Panc1 (cell line): ENCODE measurements at regions of chr6 and their contacts with region 1.

Region 1: DNA sequence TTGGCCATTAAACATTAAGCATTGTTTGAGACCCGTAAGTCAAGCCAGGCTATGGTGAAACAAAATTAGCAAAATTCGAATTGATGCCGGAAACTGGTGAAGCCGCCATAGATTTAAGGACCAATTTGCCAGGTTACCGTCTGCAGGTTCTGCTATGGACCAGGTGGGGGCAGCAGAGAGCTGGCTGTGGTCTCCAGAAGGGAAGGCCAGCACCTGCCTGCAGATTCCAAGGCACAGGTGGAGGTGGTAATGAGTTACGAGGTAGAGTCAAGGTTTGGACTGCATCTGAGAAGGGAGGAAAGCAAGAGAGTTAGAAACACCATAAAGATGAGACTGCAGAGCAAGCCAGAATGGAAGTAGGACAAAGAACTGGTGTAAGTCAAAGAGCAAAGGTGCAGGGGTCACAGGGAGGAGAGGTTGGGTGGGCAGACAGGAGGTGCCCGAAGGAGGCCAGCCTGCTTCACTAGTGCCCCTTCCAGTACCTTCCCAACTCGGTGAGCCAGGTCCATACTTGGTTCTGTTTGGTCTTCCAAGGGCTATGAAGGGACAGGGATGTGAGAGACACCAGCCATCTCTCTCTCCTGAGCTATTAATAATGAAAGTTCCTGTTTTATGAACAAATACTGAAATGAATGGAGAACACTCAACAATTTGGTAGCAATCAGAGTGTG is 131.6 kb upstream of the ESR1 start:
- DNase-seq: no peak
- ATAC-seq: peak; percentile 84
- H3K4me3 ChIP-seq: no peak overlapping the region
- H3K27ac ChIP-seq: no peak overlapping the region
- H3K4me1 ChIP-seq: no peaks in the 10 kb centered on the region
- H3K27me3 ChIP-seq: no peaks in the 10 kb centered on the region
- CTCF ChIP-seq: peak; percentile 95

Region 2: DNA sequence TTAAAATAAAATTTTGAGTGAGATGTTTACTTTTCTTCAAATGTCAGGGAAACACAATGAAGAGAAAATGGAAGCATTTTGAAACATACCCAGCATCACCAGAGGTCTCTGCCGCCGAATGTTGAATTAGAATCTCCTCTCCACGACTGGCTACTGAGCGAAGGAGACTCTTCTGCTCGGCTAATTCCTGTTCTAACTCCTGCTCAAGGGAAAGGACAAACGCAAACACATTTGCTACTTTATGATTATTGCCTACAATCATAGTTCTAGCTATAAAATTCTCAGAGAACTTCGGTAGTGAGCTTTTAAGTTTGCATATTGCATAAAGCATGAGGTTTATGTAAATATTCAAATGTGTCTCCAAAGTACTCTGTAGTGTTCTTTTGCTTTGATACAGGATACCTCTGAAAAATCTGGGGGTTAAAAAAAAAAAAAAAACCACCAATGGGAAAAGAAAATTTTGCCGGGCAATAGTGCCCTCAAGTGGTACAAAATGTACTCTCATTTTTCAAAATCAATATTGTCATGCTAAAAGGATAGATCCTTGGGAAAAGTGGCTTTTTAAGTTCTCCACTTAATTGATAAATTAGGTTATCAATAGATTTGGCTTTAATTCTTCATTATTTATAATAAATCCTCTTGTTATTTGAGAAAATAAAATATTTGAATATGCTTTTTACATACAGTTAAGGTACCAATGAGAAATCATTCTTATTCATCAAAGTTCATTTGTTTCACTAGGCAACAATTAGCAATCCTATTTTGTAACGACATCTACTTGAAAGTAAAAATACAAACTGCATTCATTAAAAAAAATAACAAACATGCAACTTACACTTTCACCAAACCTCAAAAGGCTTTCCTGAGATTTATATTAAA is 592.3 kb after region 1 on chr6:
- CTCF ChIA-PET with region 1: no interaction called
- POLR2A ChIA-PET with region 1: no interaction called
- in situ Hi-C with region 1: no loop called
- intact Hi-C with region 1: loop called (anchors 10 kb)
- DNase-seq: peak; percentile 4
- ATAC-seq: no peak
- H3K4me3 ChIP-seq: no peak overlapping the region
- H3K27ac ChIP-seq: no peak overlapping the region
- H3K4me1 ChIP-seq: no peaks in the 10 kb centered on the region
- H3K27me3 ChIP-seq: no peaks in the 10 kb centered on the region; the same call in 1 of the 2 replicates
- CTCF ChIP-seq: peak; percentile 66